ENCODE measurements at regions of chr4 and their contacts with region 1.

Region 1: DNA sequence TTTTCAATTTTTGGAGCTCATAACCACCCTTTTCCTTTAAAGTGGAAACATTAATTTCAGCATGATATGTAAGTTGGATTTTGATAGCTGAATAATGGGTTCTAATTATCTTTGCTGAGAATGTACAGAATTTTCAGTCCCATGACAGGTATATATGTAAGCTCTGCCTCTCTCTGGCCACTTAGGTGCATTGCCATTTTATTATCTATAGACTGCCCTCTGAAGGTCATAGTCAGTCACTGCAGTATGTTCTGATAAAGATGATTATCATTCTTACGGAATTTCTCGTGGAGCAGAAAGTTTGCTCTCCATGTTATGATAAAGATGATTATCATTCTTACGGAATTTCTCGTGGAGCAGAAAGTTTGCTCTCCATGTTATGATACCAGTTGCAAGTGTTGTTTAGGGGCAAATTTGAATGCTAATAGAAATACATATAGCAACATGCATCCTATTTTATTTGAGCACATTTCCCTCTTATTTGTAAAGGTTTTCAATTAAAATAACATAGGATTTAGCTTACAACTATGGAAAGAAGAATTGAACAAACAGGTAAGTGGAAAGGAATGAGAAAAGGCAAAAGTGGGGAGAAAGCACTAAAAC is 10.4 kb downstream of the AFP start:
- DNase-seq: peak in 5 of 9 donors; percentile 1 to 35 (median 18)
- ATAC-seq: peak; percentile 86
- H3K4me3 ChIP-seq: no peak overlapping the region
- H3K4me3 Mint-ChIP-seq: no peak overlapping the region
- H3K27ac ChIP-seq: no peak overlapping the region
- H3K27ac Mint-ChIP-seq: no peak overlapping the region
- H3K4me1 ChIP-seq: no peaks in the 10 kb centered on the region
- H3K4me1 Mint-ChIP-seq: no peaks in the 10 kb centered on the region
- H3K27me3 ChIP-seq: peaks cover 0 to 5% of the 10 kb centered on the region in 2 donors
- H3K27me3 Mint-ChIP-seq: peaks cover 2 to 25% (median 16%) of the 10 kb centered on the region in 5 donors

Region 2: GRCh38 chr4:72295966-72296557 is 1150.4 kb before region 1 on chr4:
- CTCF ChIA-PET with region 1: no interaction called
- POLR2A ChIA-PET with region 1: no interaction called
- intact Hi-C with region 1: loop called in 1 of 2 experiments (anchors 2 kb)
- DNase-seq: peak in 2 of 9 donors; percentile 2 to 19
- ATAC-seq: no peak
- H3K4me3 ChIP-seq: no peak overlapping the region
- H3K4me3 Mint-ChIP-seq: no peak overlapping the region
- H3K27ac ChIP-seq: no peak overlapping the region
- H3K27ac Mint-ChIP-seq: no peak overlapping the region
- H3K4me1 ChIP-seq: no peaks in the 10 kb centered on the region
- H3K4me1 Mint-ChIP-seq: peaks cover 0 to 3% (median 0%) of the 10 kb centered on the region in 7 donors
- H3K27me3 ChIP-seq: no peaks in the 10 kb centered on the region
- H3K27me3 Mint-ChIP-seq: peaks cover 3 to 21% (median 9%) of the 10 kb centered on the region in 5 donors

Region 3: DNA sequence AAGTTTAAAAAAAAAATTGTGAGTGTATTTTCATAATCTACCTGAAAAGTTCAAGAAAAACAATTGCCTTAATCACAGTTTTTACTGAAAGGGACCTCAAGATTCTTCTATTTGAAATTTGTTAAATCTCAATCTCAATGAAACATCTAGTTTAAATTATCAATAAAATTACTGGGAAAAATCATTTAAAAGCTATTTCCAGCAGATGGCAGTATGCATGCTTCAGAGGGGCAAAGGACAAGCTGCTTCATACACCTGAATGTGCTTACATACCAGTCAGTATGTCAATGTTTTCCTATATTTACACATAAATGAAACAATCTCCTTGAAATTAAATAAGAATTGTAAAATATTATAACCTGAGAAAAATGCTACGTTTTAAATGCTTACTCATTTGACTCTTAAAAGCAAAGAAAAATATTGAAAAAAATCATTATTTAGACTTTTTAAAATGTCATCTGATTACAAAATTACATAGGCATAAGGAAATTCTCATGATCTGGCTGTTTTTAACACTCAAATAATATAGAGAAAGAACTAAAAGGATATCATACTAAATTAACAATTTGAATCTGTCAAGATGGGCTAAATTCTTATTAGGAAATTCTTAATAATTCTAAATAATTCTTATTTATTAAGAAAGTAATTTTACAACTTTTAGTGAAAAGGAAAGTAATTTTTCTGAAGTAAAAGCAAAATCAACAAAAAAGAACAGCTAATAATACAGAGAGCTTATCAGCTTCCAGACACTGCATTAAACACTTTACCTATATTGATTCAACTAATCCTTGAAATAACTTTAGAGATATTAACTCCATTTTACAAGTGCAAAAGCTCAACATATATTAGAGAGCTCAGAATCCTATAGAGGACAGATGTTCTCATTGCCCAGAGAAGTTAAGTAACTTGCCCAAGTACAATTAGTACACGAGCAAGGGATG is 1119.5 kb before region 1 on chr4:
- CTCF ChIA-PET with region 1: no interaction called
- POLR2A ChIA-PET with region 1: no interaction called
- intact Hi-C with region 1: loop called in 1 of 2 experiments (anchors 2 kb)
- DNase-seq: peak in 1 of 9 donors; percentile 12
- ATAC-seq: no peak
- H3K4me3 ChIP-seq: no peak overlapping the region
- H3K4me3 Mint-ChIP-seq: no peak overlapping the region
- H3K27ac ChIP-seq: no peak overlapping the region
- H3K27ac Mint-ChIP-seq: no peak overlapping the region
- H3K4me1 ChIP-seq: no peaks in the 10 kb centered on the region
- H3K4me1 Mint-ChIP-seq: no peaks in the 10 kb centered on the region
- H3K27me3 ChIP-seq: no peaks in the 10 kb centered on the region
- H3K27me3 Mint-ChIP-seq: peaks cover 0 to 22% (median 10%) of the 10 kb centered on the region in 5 donors

Region 4: DNA sequence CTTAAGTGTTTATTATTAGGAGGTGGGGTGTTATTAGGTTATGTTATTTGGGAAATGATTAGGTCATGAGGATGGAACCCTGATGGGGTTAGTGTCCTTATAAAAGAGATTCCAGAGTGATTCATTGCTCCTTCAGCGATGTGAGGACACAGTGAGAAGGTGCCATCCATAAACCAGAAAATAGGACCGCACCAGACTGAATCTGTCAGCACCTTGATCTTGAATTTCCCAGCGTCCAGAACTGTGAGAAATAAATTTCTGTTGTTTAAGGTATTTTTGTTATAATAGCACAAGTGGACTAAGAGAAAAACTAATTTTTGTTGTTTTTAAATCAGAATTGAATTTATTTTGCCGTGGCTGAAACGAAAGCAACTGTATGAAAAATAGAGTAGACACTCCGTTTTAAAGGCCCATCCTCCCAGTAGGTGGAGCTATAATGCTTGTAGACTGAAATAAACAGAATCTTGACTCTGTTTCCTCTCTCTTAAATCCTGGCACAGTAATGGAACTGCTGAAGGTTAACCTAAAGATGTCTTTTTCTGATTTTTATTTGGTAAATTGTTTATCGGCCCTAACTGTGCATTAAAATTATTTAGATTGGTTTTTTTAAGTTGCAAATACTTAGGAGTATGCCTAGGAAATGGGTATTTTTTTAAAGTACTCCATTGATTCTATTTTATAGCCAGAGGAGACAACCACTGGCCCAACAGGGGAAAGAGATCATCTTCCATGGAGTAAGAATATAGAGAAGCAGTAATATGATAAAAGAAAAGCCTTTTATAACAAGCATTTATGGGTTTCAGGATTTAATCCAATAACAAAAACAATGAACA is 744.2 kb before region 1 on chr4:
- CTCF ChIA-PET with region 1: no interaction called
- POLR2A ChIA-PET with region 1: no interaction called
- intact Hi-C with region 1: loop called in 1 of 2 experiments (anchors 5 kb)
- DNase-seq: peak in 6 of 9 donors; percentile 10 to 32 (median 22)
- ATAC-seq: peak; percentile 56
- H3K4me3 ChIP-seq: no peak overlapping the region
- H3K4me3 Mint-ChIP-seq: peak overlapping the region in 9 of 10 donors; percentile 42 to 85 (median 83)
- H3K27ac ChIP-seq: no peak overlapping the region
- H3K27ac Mint-ChIP-seq: peak overlapping the region in 2 of 9 donors; percentile 3 to 71
- H3K4me1 ChIP-seq: no peaks in the 10 kb centered on the region
- H3K4me1 Mint-ChIP-seq: peaks cover 0 to 6% (median 0%) of the 10 kb centered on the region in 7 donors
- H3K27me3 ChIP-seq: no peaks in the 10 kb centered on the region
- H3K27me3 Mint-ChIP-seq: peaks cover 0 to 14% (median 6%) of the 10 kb centered on the region in 5 donors

Region 5: GRCh38 chr4:73341454-73341853 is 105.0 kb before region 1 on chr4:
- CTCF ChIA-PET with region 1: no interaction called
- POLR2A ChIA-PET with region 1: no interaction called
- intact Hi-C with region 1: loop called in 1 of 2 experiments (anchors 2 kb)
- DNase-seq: no peak
- ATAC-seq: no peak
- H3K4me3 ChIP-seq: no peak overlapping the region
- H3K4me3 Mint-ChIP-seq: no peak overlapping the region
- H3K27ac ChIP-seq: no peak overlapping the region
- H3K27ac Mint-ChIP-seq: no peak overlapping the region
- H3K4me1 ChIP-seq: no peaks in the 10 kb centered on the region
- H3K4me1 Mint-ChIP-seq: no peaks in the 10 kb centered on the region
- H3K27me3 ChIP-seq: no peaks in the 10 kb centered on the region
- H3K27me3 Mint-ChIP-seq: peaks cover 0 to 11% (median 6%) of the 10 kb centered on the region in 5 donors

Measured in naive thymus-derived CD4-positive, alpha-beta T cell (primary cell).